CD8-positive, alpha-beta T cell (primary cell): ENCODE measurements at regions of chr18 and their contacts with region 1.

Region 1: GRCh38 chr18:9340472-9340871 is 5.9 kb downstream of the TWSG1 start:
- DNase-seq: no peak
- ATAC-seq: no peak
- H3K4me3 ChIP-seq: no peak overlapping the region
- H3K4me3 Mint-ChIP-seq: no peak overlapping the region
- H3K27ac ChIP-seq: no peak overlapping the region
- H3K27ac Mint-ChIP-seq: no peak overlapping the region
- H3K4me1 ChIP-seq: peaks cover 1% of the 10 kb centered on the region
- H3K4me1 Mint-ChIP-seq: peaks cover 35% of the 10 kb centered on the region
- H3K27me3 ChIP-seq: no peaks in the 10 kb centered on the region
- H3K27me3 Mint-ChIP-seq: no peaks in the 10 kb centered on the region
- CTCF ChIP-seq: no peak

Region 2: GRCh38 chr18:8754995-8755955 is 585.2 kb before region 1 on chr18:
- CTCF ChIA-PET with region 1: no interaction called
- POLR2A ChIA-PET with region 1: no interaction called
- intact Hi-C with region 1: loop called in 1 of 2 experiments (anchors 5 kb)
- DNase-seq: peak in 8 of 9 experiments; percentile 28 to 83 (median 56)
- ATAC-seq: peak; percentile 98
- H3K4me3 ChIP-seq: peak overlapping the region in 1 of 2 experiments; percentile 5
- H3K4me3 Mint-ChIP-seq: peak overlapping the region; percentile 77
- H3K27ac ChIP-seq: no peak overlapping the region
- H3K27ac Mint-ChIP-seq: peak overlapping the region; percentile 25
- H3K4me1 ChIP-seq: peaks cover 31% of the 10 kb centered on the region
- H3K4me1 Mint-ChIP-seq: peaks cover 31% of the 10 kb centered on the region
- H3K27me3 ChIP-seq: no peaks in the 10 kb centered on the region
- H3K27me3 Mint-ChIP-seq: peaks cover 16% of the 10 kb centered on the region
- CTCF ChIP-seq: no peak

Region 3: GRCh38 chr18:8830067-8831060 is 510.1 kb before region 1 on chr18:
- CTCF ChIA-PET with region 1: no interaction called
- POLR2A ChIA-PET with region 1: no interaction called
- intact Hi-C with region 1: no loop called
- DNase-seq: no peak
- ATAC-seq: no peak
- H3K4me3 ChIP-seq: no peak overlapping the region
- H3K4me3 Mint-ChIP-seq: no peak overlapping the region
- H3K27ac ChIP-seq: no peak overlapping the region
- H3K27ac Mint-ChIP-seq: no peak overlapping the region
- H3K4me1 ChIP-seq: no peaks in the 10 kb centered on the region
- H3K4me1 Mint-ChIP-seq: no peaks in the 10 kb centered on the region
- H3K27me3 ChIP-seq: no peaks in the 10 kb centered on the region
- H3K27me3 Mint-ChIP-seq: peaks cover 6% of the 10 kb centered on the region
- CTCF ChIP-seq: no peak

Region 4: GRCh38 chr18:9321017-9321452 is 19.4 kb before region 1 on chr18:
- CTCF ChIA-PET with region 1: no interaction called
- POLR2A ChIA-PET with region 1: no interaction called
- intact Hi-C with region 1: no loop called
- DNase-seq: no peak
- ATAC-seq: no peak
- H3K4me3 ChIP-seq: no peak overlapping the region
- H3K4me3 Mint-ChIP-seq: no peak overlapping the region
- H3K27ac ChIP-seq: no peak overlapping the region
- H3K27ac Mint-ChIP-seq: no peak overlapping the region
- H3K4me1 ChIP-seq: no peaks in the 10 kb centered on the region
- H3K4me1 Mint-ChIP-seq: no peaks in the 10 kb centered on the region
- H3K27me3 ChIP-seq: no peaks in the 10 kb centered on the region
- H3K27me3 Mint-ChIP-seq: peaks cover 11% of the 10 kb centered on the region
- CTCF ChIP-seq: no peak

Region 5: GRCh38 chr18:9753863-9754262 is 413.4 kb after region 1 on chr18:
- CTCF ChIA-PET with region 1: no interaction called
- POLR2A ChIA-PET with region 1: no interaction called
- intact Hi-C with region 1: no loop called
- DNase-seq: no peak
- ATAC-seq: no peak
- H3K4me3 ChIP-seq: no peak overlapping the region
- H3K4me3 Mint-ChIP-seq: no peak overlapping the region
- H3K27ac ChIP-seq: no peak overlapping the region
- H3K27ac Mint-ChIP-seq: no peak overlapping the region
- H3K4me1 ChIP-seq: no peaks in the 10 kb centered on the region
- H3K4me1 Mint-ChIP-seq: no peaks in the 10 kb centered on the region
- H3K27me3 ChIP-seq: no peaks in the 10 kb centered on the region
- H3K27me3 Mint-ChIP-seq: peaks cover 7% of the 10 kb centered on the region
- CTCF ChIP-seq: no peak

Region 6: GRCh38 chr18:10289951-10290637 is 949.6 kb after region 1 on chr18:
- CTCF ChIA-PET with region 1: no interaction called
- POLR2A ChIA-PET with region 1: no interaction called
- intact Hi-C with region 1: no loop called
- DNase-seq: no peak
- ATAC-seq: no peak
- H3K4me3 ChIP-seq: no peak overlapping the region
- H3K4me3 Mint-ChIP-seq: no peak overlapping the region
- H3K27ac ChIP-seq: no peak overlapping the region
- H3K27ac Mint-ChIP-seq: no peak overlapping the region
- H3K4me1 ChIP-seq: no peaks in the 10 kb centered on the region
- H3K4me1 Mint-ChIP-seq: no peaks in the 10 kb centered on the region
- H3K27me3 ChIP-seq: no peaks in the 10 kb centered on the region
- H3K27me3 Mint-ChIP-seq: no peaks in the 10 kb centered on the region
- CTCF ChIP-seq: no peak